Stomach (tissue), 19 donors: ENCODE measurements at regions of chr9 and their contacts with region 1.

Region 1: DNA sequence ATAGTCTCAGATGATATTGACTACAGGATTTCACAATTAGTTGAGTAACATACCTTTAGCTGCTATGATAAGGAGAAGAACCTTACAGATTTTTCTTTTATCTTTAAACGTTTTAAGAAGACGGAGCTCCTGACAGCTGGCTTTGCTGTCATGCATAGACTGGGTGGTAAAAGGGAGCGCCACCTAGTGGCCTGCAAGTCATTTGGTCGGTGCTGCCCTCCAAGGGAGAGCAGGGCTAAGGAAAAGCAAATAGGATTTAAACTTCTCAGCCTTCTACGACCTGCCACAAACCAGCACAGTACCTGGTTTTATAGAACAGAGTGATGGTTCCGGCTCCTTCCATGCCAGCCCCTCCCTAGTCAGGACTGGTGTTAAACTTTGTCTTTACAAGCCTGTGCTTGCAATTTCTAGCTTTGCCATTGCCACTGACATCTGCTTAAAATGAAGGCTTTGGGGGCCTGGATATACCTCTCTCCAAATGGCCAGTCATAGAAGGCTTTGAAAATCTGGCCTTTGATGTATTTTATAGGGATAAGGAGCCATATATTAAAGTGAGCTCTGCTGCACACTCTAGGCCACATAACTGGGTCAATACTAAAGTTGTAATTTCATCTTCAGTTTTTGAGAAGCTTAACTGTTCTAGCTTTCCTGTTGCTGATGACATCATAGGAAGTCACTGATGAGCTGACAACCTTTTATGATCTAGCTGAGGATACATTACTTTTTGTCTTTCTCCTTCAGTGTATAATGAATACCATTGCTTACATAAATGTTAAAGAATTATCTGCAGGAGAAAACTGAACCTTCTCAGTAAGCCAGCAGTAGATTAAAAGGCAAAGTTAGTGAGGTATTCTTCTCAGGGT is 31.1 kb upstream of the ADAMTSL1 start:
- DNase-seq: peak; percentile 77 to 90
- H3K4me3 ChIP-seq: no peak overlapping the region
- H3K27ac ChIP-seq: no peak overlapping the region
- H3K4me1 ChIP-seq: peaks cover 11 to 50% (median 28%) of the 10 kb centered on the region in 4 donors
- H3K27me3 ChIP-seq: no peaks in the 10 kb centered on the region
- CTCF ChIP-seq: peak in 5 of 7 experiments; percentile 48 to 86 (median 79)
- EP300 ChIP-seq: no peak
- POLR2A ChIP-seq: no peak

Region 2: GRCh38 chr9:18255158-18255629 is 187.7 kb before region 1 on chr9:
- intact Hi-C with region 1: loop called (anchors 10 kb)
- DNase-seq: peak; percentile 83 to 94
- H3K4me3 ChIP-seq: no peak overlapping the region
- H3K27ac ChIP-seq: no peak overlapping the region
- H3K4me1 ChIP-seq: peaks cover 0 to 15% (median 0%) of the 10 kb centered on the region in 4 donors
- H3K27me3 ChIP-seq: no peaks in the 10 kb centered on the region
- CTCF ChIP-seq: peak in 6 of 7 experiments; percentile 35 to 97 (median 94)
- EP300 ChIP-seq: no peak
- POLR2A ChIP-seq: no peak

Region 3: DNA sequence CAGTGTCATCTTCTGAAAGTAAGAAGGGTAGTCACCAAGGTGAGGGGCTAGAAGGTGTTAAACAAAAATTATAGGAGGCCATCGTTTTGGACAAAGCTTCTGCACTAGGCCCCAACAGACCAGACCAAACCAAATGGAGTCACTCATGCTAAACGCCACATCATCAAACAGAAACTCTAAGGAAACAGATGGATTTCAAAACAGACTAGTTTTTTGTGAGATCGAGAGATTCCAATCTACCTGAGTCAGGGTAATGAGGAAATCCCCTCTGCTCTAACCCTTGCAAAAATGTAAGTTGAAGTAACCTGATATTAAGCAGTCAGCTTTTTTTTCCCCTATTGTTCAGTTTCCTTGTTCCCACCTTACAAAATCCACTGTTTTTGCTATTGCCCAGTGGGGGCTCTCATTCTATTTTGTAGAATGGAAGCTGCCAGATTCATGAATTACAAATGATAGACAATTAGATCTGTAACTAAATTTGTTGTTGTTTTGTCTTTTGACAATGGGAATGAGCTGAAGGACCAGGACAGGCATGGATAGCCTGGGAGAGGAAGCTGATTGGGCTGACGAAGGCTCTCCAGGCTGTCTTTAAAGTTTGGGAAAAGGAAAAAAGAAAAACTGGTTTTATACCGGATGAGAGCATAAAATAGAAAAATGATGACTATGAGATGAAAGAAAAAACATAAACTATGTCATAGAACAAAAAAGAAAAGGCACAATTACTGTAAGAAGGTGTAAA is 63.6 kb before region 1 on chr9:
- intact Hi-C with region 1: loop called (anchors 10 kb)
- DNase-seq: no peak
- H3K4me3 ChIP-seq: no peak overlapping the region
- H3K27ac ChIP-seq: no peak overlapping the region
- H3K4me1 ChIP-seq: no peaks in the 10 kb centered on the region
- H3K27me3 ChIP-seq: no peaks in the 10 kb centered on the region
- CTCF ChIP-seq: no peak
- EP300 ChIP-seq: no peak
- POLR2A ChIP-seq: no peak

Region 4: GRCh38 chr9:18595597-18595996 is 152.7 kb after region 1 on chr9:
- intact Hi-C with region 1: no loop called
- DNase-seq: peak in 1 of 2 donors; percentile 30
- H3K4me3 ChIP-seq: no peak overlapping the region
- H3K27ac ChIP-seq: no peak overlapping the region
- H3K4me1 ChIP-seq: peaks cover 0 to 6% (median 0%) of the 10 kb centered on the region in 4 donors
- H3K27me3 ChIP-seq: no peaks in the 10 kb centered on the region
- CTCF ChIP-seq: no peak
- EP300 ChIP-seq: no peak
- POLR2A ChIP-seq: no peak

Region 5: DNA sequence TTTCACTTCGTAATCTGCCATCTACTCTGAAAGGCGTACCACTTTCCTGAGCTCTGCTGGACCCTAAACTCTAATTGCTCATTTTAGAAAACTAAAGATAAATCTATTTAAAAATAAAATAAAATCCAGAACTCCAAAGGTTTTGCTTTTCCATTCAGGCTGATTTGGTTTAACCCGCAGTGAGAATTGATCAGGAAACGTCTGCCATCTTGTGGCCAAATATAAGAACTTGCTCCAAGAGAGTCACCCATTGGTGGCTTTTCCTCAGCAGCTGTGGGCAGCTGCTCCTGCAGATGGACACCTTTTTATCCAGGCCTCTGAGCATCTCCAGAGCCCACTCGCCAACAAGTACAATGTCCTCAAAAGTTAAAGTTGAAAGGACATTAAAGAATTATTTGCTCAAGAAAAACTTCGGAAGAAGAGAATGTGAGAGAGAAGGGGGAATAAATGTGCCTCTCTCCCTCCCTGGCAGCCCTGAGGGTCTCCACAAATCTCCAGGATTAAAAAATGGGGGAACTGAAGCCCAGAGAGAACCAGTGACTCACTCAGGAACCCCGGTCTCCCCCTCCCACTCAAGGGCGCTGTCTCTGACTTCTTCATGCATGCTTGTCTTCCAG is 586.1 kb after region 1 on chr9:
- intact Hi-C with region 1: loop called (anchors 10 kb)
- DNase-seq: peak; percentile 41 to 90
- H3K4me3 ChIP-seq: no peak overlapping the region
- H3K27ac ChIP-seq: no peak overlapping the region
- H3K4me1 ChIP-seq: peaks cover 0 to 12% (median 0%) of the 10 kb centered on the region in 4 donors
- H3K27me3 ChIP-seq: peaks cover 0 to 3% (median 0%) of the 10 kb centered on the region in 3 donors
- CTCF ChIP-seq: peak in 5 of 7 experiments; percentile 51 to 72 (median 68)
- EP300 ChIP-seq: no peak
- POLR2A ChIP-seq: no peak